Endothelial cell of umbilical vein (primary cell): ENCODE measurements at regions of chr2 and their contacts with region 1.

Region 1: DNA sequence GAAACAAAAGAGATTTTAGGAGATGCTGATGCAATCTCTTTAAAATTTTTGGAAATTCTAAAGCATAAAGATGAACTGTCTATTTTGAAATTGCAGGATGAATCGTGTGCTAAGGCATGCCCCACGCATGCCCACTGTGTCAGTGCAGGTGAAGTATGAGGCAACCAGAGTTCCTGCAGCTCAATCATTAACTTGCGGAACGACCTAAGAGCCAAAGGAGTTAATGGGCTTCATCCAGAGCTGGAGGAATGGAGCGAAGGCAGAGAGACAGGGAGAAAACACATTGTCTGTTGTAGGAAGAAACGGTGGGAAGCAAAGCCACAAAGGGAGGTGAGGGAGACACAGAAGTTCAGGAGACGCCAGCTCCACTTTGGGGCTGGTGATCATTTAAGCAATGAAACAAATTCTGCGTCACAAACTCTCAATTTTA is 265.2 kb downstream of the CCDC85A start:
- DNase-seq: no peak
- H3K4me3 ChIP-seq: no peak overlapping the region
- H3K27ac ChIP-seq: no peak overlapping the region
- H3K4me1 ChIP-seq: no peaks in the 10 kb centered on the region
- H3K27me3 ChIP-seq: peaks cover 0 to 2% of the 10 kb centered on the region in 2 experiments
- CTCF ChIP-seq: no peak
- POLR2A ChIP-seq: no peak

Region 2: DNA sequence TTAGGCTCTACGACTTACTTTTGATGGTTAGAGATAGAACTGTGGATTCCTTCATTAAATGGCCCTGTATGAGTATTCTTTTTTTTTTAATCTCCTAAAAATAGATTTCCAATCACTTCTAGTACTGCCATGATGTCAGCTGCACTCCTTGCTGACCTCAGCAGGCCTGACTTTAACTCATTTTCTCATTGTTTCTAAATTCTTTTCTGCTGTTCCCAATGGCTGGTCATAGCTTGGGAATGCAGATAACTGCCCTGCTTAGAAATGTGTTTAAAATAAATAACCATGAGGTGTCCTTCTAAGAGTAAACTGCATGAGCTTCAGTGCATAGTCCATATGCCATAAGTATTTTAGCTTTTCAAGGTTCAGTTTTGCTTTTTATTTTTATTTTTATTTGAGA is 249.5 kb before region 1 on chr2:
- CTCF ChIA-PET with region 1: no interaction called
- POLR2A ChIA-PET with region 1: no interaction called
- dilution Hi-C with region 1: no loop called
- intact Hi-C with region 1: loop called (anchors 5 kb)
- DNase-seq: peak; percentile 10
- H3K4me3 ChIP-seq: no peak overlapping the region
- H3K27ac ChIP-seq: no peak overlapping the region
- H3K4me1 ChIP-seq: peaks cover 17% of the 10 kb centered on the region
- H3K27me3 ChIP-seq: no peaks in the 10 kb centered on the region
- CTCF ChIP-seq: no peak
- POLR2A ChIP-seq: no peak

Region 3: DNA sequence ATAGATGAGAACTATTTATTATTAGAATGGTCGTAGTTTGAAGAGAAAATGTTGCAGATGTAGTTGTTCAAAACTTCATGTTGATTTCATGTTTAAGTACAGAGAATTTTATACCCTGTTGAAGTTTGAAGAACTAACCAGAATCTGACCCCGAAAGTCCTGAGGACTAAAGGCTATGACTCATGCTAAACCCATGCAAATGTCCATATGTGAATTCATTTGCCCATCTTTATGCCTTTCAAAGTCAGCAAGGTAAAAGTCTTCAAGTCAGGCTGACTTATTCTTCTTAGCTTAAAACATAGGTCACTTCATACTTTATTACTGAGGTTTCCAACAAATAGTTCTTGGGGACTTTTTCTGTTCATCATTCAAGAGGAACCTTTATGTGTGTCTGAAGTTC is 79.7 kb before region 1 on chr2:
- CTCF ChIA-PET with region 1: no interaction called
- POLR2A ChIA-PET with region 1: no interaction called
- dilution Hi-C with region 1: no loop called
- intact Hi-C with region 1: no loop called
- DNase-seq: no peak
- H3K4me3 ChIP-seq: no peak overlapping the region
- H3K27ac ChIP-seq: no peak overlapping the region
- H3K4me1 ChIP-seq: peaks cover 3% of the 10 kb centered on the region
- H3K27me3 ChIP-seq: no peaks in the 10 kb centered on the region
- CTCF ChIP-seq: no peak
- POLR2A ChIP-seq: no peak